Caco-2 (cell line): ENCODE measurements at regions of chr5 and their contacts with region 1.

Region 1: DNA sequence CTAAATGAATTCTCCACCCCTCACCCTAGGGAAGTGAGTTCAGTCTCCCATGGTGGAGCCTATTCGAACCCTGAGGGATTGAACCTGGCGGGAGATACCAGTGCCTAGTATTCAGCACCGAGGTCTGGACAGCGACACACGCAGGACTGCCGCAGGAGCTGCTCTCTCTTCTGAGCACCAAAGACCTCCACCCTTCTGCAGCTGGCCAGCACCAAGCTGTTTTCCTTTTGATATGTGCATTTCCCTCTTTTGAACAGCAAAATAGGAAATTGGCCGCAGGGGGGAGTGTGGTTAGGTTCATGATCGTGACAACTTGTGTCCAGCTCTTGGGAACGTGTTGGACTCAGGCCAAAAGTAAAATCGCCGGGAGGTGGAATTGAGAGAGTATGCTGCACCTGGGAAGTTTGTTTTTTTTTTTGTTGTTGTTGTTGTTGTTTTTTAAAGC is 1.2 kb upstream of the PCSK1 start:
- DNase-seq: peak; percentile 63 to 77
- H3K4me3 ChIP-seq: no peak overlapping the region
- H3K4me3 Mint-ChIP-seq: no peak overlapping the region
- H3K27ac Mint-ChIP-seq: no peak overlapping the region
- H3K4me1 ChIP-seq: no peaks in the 10 kb centered on the region
- H3K4me1 Mint-ChIP-seq: peaks cover 6% of the 10 kb centered on the region
- H3K27me3 ChIP-seq: peaks cover 1% of the 10 kb centered on the region; the same call in 1 of the 2 replicates
- H3K27me3 Mint-ChIP-seq: peaks cover 36% of the 10 kb centered on the region
- CTCF ChIP-seq: no peak

Region 2: GRCh38 chr5:96350678-96351077 is 83.5 kb before region 1 on chr5:
- CTCF ChIA-PET with region 1: no interaction called
- POLR2A ChIA-PET with region 1: no interaction called
- intact Hi-C with region 1: loop called (anchors 5 kb)
- DNase-seq: no peak
- H3K4me3 ChIP-seq: no peak overlapping the region
- H3K4me3 Mint-ChIP-seq: no peak overlapping the region
- H3K27ac Mint-ChIP-seq: no peak overlapping the region
- H3K4me1 ChIP-seq: peaks cover 24% of the 10 kb centered on the region
- H3K4me1 Mint-ChIP-seq: no peaks in the 10 kb centered on the region
- H3K27me3 ChIP-seq: no peaks in the 10 kb centered on the region
- H3K27me3 Mint-ChIP-seq: no peaks in the 10 kb centered on the region
- CTCF ChIP-seq: no peak

Region 3: GRCh38 chr5:96483878-96484277 is 49.7 kb after region 1 on chr5:
- CTCF ChIA-PET with region 1: no interaction called
- POLR2A ChIA-PET with region 1: no interaction called
- intact Hi-C with region 1: loop called (anchors 5 kb)
- DNase-seq: peak; percentile 47 to 65
- H3K4me3 ChIP-seq: no peak overlapping the region
- H3K4me3 Mint-ChIP-seq: no peak overlapping the region
- H3K27ac Mint-ChIP-seq: no peak overlapping the region
- H3K4me1 ChIP-seq: no peaks in the 10 kb centered on the region
- H3K4me1 Mint-ChIP-seq: no peaks in the 10 kb centered on the region
- H3K27me3 ChIP-seq: no peaks in the 10 kb centered on the region
- H3K27me3 Mint-ChIP-seq: peaks cover 6% of the 10 kb centered on the region
- CTCF ChIP-seq: no peak